ENCODE measurements at regions of chr7 and their contacts with region 1.

Region 1: GRCh38 chr7:120987683-120988590 is 574 bp upstream of the CPED1 start:
- DNase-seq: peak; percentile 88 to 93
- ATAC-seq: peak; percentile 95

Region 2: DNA sequence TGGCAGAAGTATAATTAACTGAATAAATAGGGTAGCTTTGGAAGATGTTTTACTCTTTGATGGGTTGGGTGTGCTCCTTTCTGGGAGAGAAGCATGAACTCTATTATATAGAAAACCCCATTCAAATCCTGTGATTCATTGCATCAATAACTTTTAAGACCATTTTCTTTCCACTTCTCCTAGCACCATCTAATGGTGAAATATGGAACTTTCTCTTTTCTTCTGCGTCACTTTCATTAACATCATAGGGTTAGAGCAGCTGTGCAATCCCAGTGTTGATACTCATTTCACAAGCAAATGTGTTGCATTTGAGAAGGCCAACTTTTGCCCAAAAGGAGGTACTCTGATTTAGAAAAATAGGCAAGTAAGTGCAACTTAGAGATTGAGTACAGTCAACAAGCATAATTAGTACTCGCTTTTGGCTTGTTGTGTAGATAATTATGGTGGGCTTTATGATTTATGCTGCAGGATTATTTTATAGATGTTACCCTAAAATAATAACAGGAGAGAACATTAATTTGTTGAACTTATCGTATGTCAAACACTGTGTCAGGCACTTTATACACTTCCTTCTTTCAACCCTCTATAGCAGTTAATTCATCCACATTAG is 93.5 kb after region 1 on chr7:
- intact Hi-C with region 1: loop called (anchors 2 to 5 kb)
- DNase-seq: no peak
- ATAC-seq: peak; percentile 68

Measured in left colon (tissue), 2 donors.